MCF 10A (cell line): ENCODE measurements at regions of chr1 and their contacts with region 1.

Region 1: DNA sequence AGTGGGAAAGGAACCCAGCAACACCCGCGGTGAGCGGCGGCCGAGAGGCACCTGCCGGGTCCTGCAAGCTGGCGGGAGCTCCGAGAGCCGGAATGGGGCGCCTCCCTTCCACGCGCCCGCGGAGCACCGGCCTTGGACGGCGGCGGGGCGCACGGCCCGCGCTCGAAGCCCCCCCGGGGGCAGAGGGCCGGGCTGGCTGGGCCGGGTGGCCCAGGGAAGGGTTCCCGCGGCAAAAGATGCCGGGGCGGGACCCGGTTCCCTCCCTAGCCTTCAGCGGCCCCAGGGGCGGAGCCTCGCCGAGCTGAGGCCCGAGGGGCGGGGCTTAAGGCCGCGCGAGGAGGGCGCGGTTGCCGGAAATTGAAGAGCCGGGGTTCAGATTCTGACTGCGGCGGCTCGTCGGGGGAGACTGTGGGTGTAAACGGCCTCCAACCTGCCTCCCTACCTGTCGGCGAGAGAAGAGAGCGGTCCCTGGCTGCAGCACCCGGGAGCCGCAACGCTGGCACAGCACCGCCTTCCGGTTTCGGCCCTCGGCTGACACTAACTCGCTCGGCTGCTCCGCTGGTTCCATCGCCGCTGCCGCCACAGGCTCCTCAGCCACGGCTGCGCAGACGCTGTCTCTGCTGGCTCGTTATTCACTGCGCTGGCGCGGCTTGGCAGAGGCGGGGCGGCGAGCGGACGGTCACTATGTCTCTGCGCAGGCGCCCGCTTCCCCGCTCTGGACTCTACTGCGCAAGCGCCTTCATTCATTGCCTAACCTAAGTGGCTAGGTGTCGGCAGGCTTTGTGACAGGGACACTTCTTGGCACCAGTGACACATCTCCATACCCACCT is at the start of gene RABIF:
- DNase-seq: peak; percentile 99
- H3K4me3 Mint-ChIP-seq: peak within 1 kb of the TSS; percentile 97
- H3K27ac Mint-ChIP-seq: peak within 1 kb of the TSS; percentile 88
- H3K4me1 Mint-ChIP-seq: peaks cover 7% of the 10 kb centered on the region
- H3K27me3 Mint-ChIP-seq: no peaks in the 10 kb centered on the region
- CTCF ChIP-seq: no peak
- total RNA-seq, gene RABIF: 11.2 and 13.5 TPM in 2 replicates

Region 2: GRCh38 chr1:202861420-202862200 is 27.1 kb before region 1 on chr1:
- CTCF ChIA-PET with region 1: interaction called, 4 read pairs
- POLR2A ChIA-PET with region 1: interaction called, 16 read pairs
- intact Hi-C with region 1: no loop called
- DNase-seq: peak; percentile 97
- H3K4me3 Mint-ChIP-seq: peak overlapping the region; percentile 87
- H3K27ac Mint-ChIP-seq: no peak overlapping the region
- H3K4me1 Mint-ChIP-seq: peaks cover 6% of the 10 kb centered on the region
- H3K27me3 Mint-ChIP-seq: peaks cover 39% of the 10 kb centered on the region
- CTCF ChIP-seq: no peak

Region 3: GRCh38 chr1:202871366-202871765 is 17.4 kb before region 1 on chr1:
- CTCF ChIA-PET with region 1: interaction called, 3 read pairs
- POLR2A ChIA-PET with region 1: interaction called, 22 read pairs
- intact Hi-C with region 1: no loop called
- DNase-seq: no peak
- H3K4me3 Mint-ChIP-seq: no peak overlapping the region
- H3K27ac Mint-ChIP-seq: no peak overlapping the region
- H3K4me1 Mint-ChIP-seq: no peaks in the 10 kb centered on the region
- H3K27me3 Mint-ChIP-seq: peaks cover 19% of the 10 kb centered on the region
- CTCF ChIP-seq: no peak

Region 4: DNA sequence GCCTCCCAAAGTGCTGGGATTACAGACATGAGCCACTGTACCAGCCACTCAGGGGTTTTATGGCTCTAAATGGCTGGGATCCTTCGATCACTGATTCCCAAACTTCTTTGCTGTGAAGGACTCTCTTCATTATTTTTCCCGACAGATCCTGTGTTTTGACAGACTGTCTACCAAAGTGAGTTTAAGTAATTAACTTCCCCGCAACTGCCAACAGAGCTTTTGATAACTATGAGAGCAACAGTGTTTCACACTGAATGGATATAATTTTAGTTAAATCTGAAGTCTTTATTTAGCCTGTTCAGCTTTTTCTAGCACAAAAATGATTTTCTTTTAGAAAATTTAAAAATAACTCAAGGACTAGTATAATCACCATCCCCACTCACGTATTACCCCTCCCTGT is 12.8 kb after region 1 on chr1:
- CTCF ChIA-PET with region 1: interaction called, 3 read pairs
- POLR2A ChIA-PET with region 1: interaction called, 11 read pairs
- intact Hi-C with region 1: no loop called
- DNase-seq: no peak
- H3K4me3 Mint-ChIP-seq: no peak overlapping the region
- H3K27ac Mint-ChIP-seq: no peak overlapping the region
- H3K4me1 Mint-ChIP-seq: no peaks in the 10 kb centered on the region
- H3K27me3 Mint-ChIP-seq: no peaks in the 10 kb centered on the region
- CTCF ChIP-seq: no peak

Region 5: GRCh38 chr1:202968840-202969295 is 80.1 kb after region 1 on chr1:
- CTCF ChIA-PET with region 1: interaction called, 4 read pairs
- POLR2A ChIA-PET with region 1: interaction called, 7 read pairs
- intact Hi-C with region 1: loop called (anchors 5 kb)
- DNase-seq: peak; percentile 85
- H3K4me3 Mint-ChIP-seq: no peak overlapping the region
- H3K27ac Mint-ChIP-seq: no peak overlapping the region
- H3K4me1 Mint-ChIP-seq: peaks cover 29% of the 10 kb centered on the region
- H3K27me3 Mint-ChIP-seq: peaks cover 3% of the 10 kb centered on the region
- CTCF ChIP-seq: peak; percentile 79

Region 6: DNA sequence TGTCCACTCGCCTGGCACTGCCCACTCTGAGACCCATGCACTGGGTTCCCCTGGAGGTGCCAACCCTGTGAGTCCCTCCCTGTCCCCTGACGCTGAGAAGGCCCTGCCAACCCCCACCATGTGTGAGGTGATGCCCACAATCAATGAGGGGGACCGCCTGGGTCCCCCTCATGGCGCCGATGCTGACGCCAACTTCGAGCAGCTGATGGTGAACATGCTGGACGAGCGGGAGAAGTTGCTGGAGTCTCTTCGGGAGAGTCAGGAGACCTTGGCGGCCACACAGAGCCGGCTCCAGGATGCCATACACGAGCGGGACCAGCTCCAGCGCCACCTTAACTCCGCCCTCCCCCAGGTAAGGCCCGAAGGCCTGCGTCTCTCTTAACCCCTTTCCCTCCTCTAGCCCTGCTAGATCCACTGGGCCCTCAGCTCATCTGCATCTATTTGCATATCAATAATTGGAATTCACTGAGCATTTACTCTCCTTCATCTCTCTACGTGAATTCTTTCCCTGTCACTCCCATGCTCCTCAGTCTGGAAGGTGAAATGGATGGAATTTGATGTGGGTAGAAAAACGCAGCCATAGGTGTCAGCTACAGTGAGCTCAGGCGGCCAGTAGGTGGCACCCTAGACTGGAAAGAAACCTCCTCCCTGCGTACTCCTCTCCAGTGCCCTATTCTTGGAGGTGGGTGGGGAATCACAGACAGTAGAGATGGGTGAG is 150.3 kb after region 1 on chr1:
- CTCF ChIA-PET with region 1: no interaction called
- POLR2A ChIA-PET with region 1: no interaction called
- intact Hi-C with region 1: no loop called
- DNase-seq: peak; percentile 90
- H3K4me3 Mint-ChIP-seq: no peak overlapping the region
- H3K27ac Mint-ChIP-seq: no peak overlapping the region
- H3K4me1 Mint-ChIP-seq: peaks cover 18% of the 10 kb centered on the region
- H3K27me3 Mint-ChIP-seq: no peaks in the 10 kb centered on the region
- CTCF ChIP-seq: peak; percentile 100